ENCODE measurements at regions of chr22 and their contacts with region 1.

Region 1: GRCh38 chr22:42001121-42001520 is 2.5 kb downstream of the WBP2NL start:
- DNase-seq: no peak
- ATAC-seq: no peak
- H3K4me3 ChIP-seq: no peak overlapping the region
- H3K27ac ChIP-seq: no peak overlapping the region
- H3K4me1 ChIP-seq: no peaks in the 10 kb centered on the region
- H3K27me3 ChIP-seq: no peaks in the 10 kb centered on the region
- CTCF ChIP-seq: no peak

Region 2: DNA sequence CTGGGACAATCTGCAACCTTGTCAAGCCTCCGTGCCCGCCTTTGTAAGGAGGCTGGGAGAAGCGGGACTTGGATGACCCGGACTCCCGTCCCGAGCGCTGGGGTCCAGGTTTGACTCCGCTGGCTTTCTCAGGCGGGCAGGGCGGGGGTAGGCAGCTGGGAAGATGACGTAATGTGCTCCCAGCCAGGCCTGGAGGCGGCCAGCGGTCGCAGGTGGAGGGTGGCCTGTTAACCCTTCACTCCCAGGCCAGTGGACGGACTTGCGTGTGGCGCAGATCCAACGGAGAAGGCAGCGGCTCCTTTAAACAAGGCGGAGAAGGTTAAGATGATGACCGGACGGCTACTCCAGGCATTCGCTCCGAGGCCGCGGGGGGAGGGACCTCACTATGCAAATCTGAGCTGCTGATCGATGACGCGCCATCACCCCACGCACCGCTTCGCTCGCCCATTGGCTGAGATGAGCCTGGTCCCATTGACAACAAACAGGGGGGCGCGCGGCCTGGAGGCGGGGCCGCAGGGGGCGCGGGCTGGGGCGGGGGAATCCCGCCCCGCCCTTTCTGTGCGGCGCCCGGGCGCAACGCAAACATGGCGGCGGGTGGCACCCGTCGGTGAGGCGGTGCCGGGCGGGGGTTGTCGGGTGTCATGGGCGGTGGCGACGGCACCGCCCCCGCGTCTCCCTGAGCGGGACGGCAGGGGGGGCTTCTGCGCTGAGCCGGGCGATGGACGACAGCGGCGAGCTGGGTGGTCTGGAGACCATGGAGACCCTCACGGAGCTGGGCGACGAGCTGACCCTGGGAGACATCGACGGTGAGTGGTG is 168.4 kb before region 1 on chr22 and contains the start of gene SREBF2:
- CTCF ChIA-PET with region 1: no interaction called
- POLR2A ChIA-PET with region 1: interaction called, 15 read pairs
- intact Hi-C with region 1: no loop called
- DNase-seq: peak; percentile 97
- ATAC-seq: peak; percentile 91
- H3K4me3 ChIP-seq: peak within 1 kb of the TSS; percentile 95
- H3K27ac ChIP-seq: peak within 1 kb of the TSS; percentile 94
- H3K4me1 ChIP-seq: peaks cover 13% of the 10 kb centered on the region
- H3K27me3 ChIP-seq: no peaks in the 10 kb centered on the region
- CTCF ChIP-seq: no peak
- total RNA-seq, gene SREBF2: 38.7 and 40.0 TPM in 2 replicates

Measured in PC-3 (cell line).